Activated naive CD8-positive, alpha-beta T cell treated with anti-CD3 and anti-CD28 coated beads, Interleukin-2, amount 10 ng/mL, durations not matched to agents 7 days and 5 days (primary cell): ENCODE measurements at regions of chr3 and their contacts with region 1.

Region 1: GRCh38 chr3:185929192-185930151 is 8.3 kb downstream of the TRA2B start:
- DNase-seq: no peak
- ATAC-seq: no peak
- H3K4me3 Mint-ChIP-seq: peak overlapping the region; percentile 99
- H3K27ac Mint-ChIP-seq: peak overlapping the region; percentile 75
- H3K4me1 Mint-ChIP-seq: peaks cover 80% of the 10 kb centered on the region
- H3K27me3 Mint-ChIP-seq: no peaks in the 10 kb centered on the region

Region 2: DNA sequence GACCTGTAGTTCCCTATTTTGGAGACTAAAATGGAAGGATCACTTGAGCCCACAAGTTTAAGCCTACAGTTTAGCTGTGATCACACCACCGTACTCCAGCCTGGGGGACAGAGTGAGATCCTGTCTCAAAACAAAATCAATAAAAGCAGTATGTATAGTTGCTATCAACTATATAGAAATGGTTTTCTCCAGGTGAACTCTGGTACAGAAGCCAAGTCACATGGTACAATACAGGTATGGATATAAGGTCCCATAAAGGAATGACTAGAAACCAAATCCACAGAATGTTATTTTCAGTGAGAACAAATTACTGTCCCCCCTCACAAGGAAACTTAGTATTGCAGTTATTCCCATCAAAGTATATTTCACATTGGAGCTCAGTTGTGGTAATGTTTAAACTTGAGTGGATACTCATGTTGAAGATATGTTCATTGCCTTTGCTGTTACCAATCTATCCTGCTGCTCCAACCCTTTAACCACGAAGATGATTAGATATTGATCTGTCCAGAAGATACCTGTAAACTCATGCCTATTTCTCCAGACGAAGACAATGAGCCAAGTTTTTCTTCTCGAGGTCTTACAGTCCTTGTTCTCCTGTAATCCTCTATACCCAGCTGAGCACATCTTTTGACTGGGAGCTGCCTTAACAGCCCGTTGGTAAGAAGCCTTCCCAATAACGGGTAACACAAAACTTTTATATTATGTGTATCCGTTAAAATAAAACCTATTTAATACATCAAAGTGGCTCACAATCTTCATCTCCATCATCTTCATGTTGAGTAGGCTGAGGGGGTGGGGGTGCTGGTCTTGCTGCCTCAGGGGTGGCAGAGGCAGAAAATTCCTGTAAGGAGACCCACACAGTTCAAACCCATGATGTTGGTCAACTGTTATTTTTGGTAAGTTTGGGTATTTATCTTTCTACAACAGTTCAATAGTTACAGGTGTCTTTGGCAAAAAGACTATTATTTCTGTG is 16.3 kb before region 1 on chr3:
- POLR2A ChIA-PET with region 1: interaction called, 10 read pairs
- DNase-seq: no peak
- ATAC-seq: no peak
- H3K4me3 Mint-ChIP-seq: no peak overlapping the region
- H3K27ac Mint-ChIP-seq: peak overlapping the region; percentile 30
- H3K4me1 Mint-ChIP-seq: peaks cover 2% of the 10 kb centered on the region
- H3K27me3 Mint-ChIP-seq: no peaks in the 10 kb centered on the region

Region 3: GRCh38 chr3:186044973-186045372 is 115.5 kb after region 1 on chr3:
- POLR2A ChIA-PET with region 1: no interaction called
- DNase-seq: no peak
- ATAC-seq: no peak
- H3K4me3 Mint-ChIP-seq: no peak overlapping the region
- H3K27ac Mint-ChIP-seq: no peak overlapping the region
- H3K4me1 Mint-ChIP-seq: no peaks in the 10 kb centered on the region
- H3K27me3 Mint-ChIP-seq: peaks cover 61% of the 10 kb centered on the region